OCI-LY7 (cell line): ENCODE measurements at regions of chr17 and their contacts with region 1.

Region 1: GRCh38 chr17:49260011-49260921 is 29.7 kb upstream of the PHOSPHO1 start:
- DNase-seq: no peak
- H3K4me3 ChIP-seq: peak overlapping the region; percentile 18
- H3K27ac ChIP-seq: no peak overlapping the region
- H3K4me1 ChIP-seq: no peaks in the 10 kb centered on the region
- CTCF ChIP-seq: no peak

Region 2: DNA sequence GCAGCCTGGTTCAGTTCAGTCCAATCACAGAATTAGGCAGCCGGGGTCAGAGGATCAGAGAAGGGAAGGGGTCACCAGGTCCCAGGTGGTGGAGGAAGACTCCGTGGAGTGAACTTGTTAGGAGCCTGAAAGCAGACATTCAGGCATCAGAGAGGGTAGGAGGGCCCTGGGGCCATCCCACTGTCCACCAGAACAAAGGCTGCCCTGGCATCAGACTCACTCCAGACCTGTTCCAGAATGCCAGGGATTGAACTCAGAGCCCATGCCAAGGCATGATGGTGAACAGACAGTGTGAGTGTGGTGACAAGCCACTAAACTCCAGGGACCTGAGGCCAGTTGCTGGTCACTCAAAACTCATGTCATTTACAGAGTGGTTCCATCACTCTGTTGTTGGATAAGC is 90.0 kb before region 1 on chr17:
- CTCF ChIA-PET with region 1: no interaction called
- POLR2A ChIA-PET with region 1: no interaction called
- intact Hi-C with region 1: no loop called
- DNase-seq: no peak
- H3K4me3 ChIP-seq: no peak overlapping the region
- H3K27ac ChIP-seq: no peak overlapping the region
- H3K4me1 ChIP-seq: no peaks in the 10 kb centered on the region
- CTCF ChIP-seq: no peak

Region 3: GRCh38 chr17:49280918-49281317 is 20.7 kb after region 1 on chr17:
- CTCF ChIA-PET with region 1: no interaction called
- POLR2A ChIA-PET with region 1: interaction called, 10 read pairs
- intact Hi-C with region 1: no loop called
- DNase-seq: no peak
- H3K4me3 ChIP-seq: no peak overlapping the region
- H3K27ac ChIP-seq: no peak overlapping the region
- H3K4me1 ChIP-seq: no peaks in the 10 kb centered on the region
- CTCF ChIP-seq: no peak